Endothelial cell of umbilical vein (primary cell): ENCODE measurements at regions of chr7 and their contacts with region 1.

Region 1: DNA sequence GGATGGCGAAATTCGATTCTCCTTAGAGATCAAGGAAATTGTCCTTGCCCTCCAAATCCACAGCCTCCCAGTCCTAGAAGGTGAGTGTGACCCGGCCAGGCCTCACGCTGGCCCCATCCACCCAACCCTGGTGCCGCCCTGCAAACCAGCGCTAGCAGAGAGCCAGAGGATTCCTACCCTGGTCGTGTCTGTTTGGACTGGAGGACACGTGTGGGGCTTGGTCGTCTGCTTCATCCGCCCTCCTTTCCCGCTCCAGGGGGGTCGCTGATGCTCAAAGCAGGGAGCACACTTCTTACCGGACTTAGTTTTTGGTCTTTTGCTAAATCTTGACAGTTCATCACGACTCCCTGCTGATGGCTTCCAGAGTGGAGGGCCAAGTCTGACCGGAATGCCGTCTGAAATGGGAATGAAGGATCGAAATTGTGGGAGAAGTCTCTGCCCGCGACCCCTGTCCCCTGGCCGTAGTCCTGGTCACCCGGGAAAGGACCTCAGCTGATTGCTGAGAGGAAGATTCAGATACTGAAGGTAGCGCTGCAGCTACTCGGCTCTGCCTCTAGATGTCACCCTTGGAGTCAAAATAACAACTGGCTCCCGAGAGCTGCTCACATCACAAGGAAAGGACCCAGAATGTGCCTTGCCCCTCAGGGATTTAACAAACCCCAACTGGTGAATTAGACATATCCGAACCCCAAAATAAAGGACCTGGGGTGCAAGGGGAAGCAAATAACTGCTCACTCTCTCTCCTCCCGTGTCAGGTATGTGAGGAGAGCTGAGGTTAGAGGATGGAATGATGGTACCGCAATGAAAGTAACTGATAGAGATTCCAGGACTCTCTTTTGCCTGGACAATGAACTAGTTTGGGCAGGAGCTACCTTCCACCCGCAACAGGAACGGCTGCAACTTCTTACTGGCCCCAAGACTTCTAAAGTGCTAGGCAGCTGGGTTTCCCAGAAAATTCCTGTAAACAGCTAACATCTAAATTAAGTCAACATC is 23.5 kb upstream of the ORC5 start:
- DNase-seq: peak; percentile 49
- H3K4me3 ChIP-seq: no peak overlapping the region
- H3K27ac ChIP-seq: no peak overlapping the region
- H3K4me1 ChIP-seq: no peaks in the 10 kb centered on the region
- H3K27me3 ChIP-seq: peaks cover 6 to 29% of the 10 kb centered on the region in 2 experiments
- CTCF ChIP-seq: peak; percentile 70 to 85
- POLR2A ChIP-seq: no peak

Region 2: DNA sequence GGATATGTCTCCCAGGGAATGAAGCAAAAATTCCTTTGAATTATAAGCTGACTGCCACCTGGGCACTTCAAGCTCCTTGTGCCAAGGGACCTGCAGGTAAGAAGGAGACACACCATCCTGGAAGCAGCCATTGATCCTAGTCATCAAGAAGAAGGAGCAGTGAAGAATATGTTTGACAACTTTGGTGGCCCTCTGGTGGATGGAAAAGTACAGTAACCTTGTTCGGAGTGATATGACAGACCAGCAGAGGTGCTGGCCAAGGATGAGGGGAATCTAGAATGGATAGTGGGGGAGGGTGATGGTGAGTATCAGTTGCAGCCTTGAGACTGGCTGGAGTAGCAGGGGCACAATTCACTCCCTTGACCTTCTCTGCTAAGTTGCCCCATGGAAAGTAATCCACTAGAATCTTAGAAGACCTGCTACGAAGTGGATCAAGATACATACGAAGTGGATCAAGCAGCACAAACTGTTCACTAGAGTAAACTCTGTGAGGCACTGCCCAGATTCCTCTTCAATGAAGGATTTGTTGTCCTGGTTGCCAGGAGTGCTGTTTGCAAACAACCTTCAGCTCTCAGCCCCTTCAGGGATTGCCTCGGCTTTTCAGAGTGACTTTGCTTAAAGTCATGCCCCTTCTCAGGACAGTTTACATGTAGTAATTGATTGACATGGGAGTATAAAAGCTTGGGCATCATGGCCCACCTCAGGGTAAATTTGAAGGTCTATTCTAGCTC is 21.2 kb after region 1 on chr7:
- CTCF ChIA-PET with region 1: interaction called, 19 read pairs
- POLR2A ChIA-PET with region 1: no interaction called
- dilution Hi-C with region 1: no loop called
- intact Hi-C with region 1: loop called (anchors 1 kb)
- DNase-seq: no peak
- H3K4me3 ChIP-seq: no peak overlapping the region
- H3K27ac ChIP-seq: no peak overlapping the region
- H3K4me1 ChIP-seq: no peaks in the 10 kb centered on the region
- H3K27me3 ChIP-seq: peaks cover 3 to 4% of the 10 kb centered on the region in 2 experiments
- CTCF ChIP-seq: no peak
- POLR2A ChIP-seq: no peak

Region 3: DNA sequence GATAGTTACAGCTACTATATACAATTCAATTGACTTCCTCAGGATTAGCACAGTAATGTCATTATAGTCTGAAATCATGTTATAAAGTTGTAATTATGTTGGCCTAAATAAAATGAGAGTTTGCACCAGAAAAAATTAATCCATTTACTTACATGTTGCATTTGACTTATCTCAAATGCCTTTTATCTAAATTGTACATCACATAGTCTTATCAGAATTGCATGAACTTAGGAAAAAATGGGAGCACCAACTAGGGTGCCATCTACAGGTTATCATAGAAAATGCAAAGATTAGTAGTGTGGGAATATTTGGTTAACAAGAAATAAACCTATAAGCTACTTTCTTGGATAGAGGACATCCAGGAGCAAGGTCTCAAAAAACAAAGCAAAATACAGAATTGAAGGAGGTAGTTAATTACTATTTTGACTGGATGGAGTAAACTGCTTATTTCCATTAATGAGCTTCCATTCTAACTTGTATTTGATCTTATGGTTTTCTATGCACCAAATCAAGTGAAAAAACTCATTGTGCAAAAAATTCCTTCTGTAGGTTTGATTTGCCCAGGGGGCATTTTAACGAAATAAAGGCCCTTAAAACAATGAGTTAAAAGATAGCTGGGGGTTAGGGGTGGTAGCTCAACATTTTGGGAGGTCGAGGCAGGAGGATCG is 36.5 kb after region 1 on chr7:
- CTCF ChIA-PET with region 1: interaction called, 98 read pairs
- POLR2A ChIA-PET with region 1: no interaction called
- dilution Hi-C with region 1: no loop called
- intact Hi-C with region 1: loop called (anchors 1 kb)
- DNase-seq: peak; percentile 28
- H3K4me3 ChIP-seq: no peak overlapping the region
- H3K27ac ChIP-seq: no peak overlapping the region
- H3K4me1 ChIP-seq: no peaks in the 10 kb centered on the region
- H3K27me3 ChIP-seq: peaks cover 0 to 3% of the 10 kb centered on the region in 2 experiments
- CTCF ChIP-seq: peak; percentile 16 to 32
- POLR2A ChIP-seq: no peak

Region 4: GRCh38 chr7:104272767-104273384 is 41.5 kb after region 1 on chr7:
- CTCF ChIA-PET with region 1: interaction called, 98 read pairs
- POLR2A ChIA-PET with region 1: no interaction called
- dilution Hi-C with region 1: no loop called
- intact Hi-C with region 1: no loop called
- DNase-seq: peak; percentile 55
- H3K4me3 ChIP-seq: no peak overlapping the region
- H3K27ac ChIP-seq: no peak overlapping the region
- H3K4me1 ChIP-seq: no peaks in the 10 kb centered on the region
- H3K27me3 ChIP-seq: peaks cover 1 to 3% of the 10 kb centered on the region in 2 experiments
- CTCF ChIP-seq: peak; percentile 27 to 44
- POLR2A ChIP-seq: no peak

Region 5: DNA sequence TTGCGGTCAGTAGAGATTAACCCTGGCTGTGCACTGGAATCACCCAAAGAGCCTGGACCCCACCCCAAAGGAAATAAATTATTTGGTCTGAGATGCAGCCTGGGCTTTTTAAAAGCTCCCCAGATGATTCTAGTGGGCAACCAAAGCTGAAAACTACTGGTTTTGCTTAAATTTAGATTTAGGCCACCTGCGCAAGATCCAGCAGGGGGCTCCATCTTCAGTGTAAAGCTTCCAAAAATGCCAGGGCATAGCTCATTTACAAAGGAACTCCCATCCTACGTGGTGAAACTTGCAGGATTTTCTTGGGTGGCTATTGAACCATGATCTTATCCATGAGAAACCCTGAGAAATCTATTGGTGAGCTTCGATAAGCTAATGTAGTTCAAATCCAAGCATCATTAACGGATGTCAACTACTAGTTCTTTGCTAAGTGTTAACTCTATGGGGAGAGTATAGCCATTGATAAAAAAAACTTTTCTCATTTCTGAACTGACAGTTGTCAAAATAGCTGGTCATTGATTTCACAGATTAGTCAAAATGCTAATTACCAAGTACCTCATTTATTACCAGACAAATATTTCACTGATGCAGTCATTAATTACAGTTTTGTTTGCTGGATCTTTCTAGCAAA is 412.4 kb after region 1 on chr7:
- CTCF ChIA-PET with region 1: interaction called, 16 read pairs
- POLR2A ChIA-PET with region 1: no interaction called
- dilution Hi-C with region 1: no loop called
- intact Hi-C with region 1: no loop called
- DNase-seq: peak; percentile 23
- H3K4me3 ChIP-seq: no peak overlapping the region
- H3K27ac ChIP-seq: no peak overlapping the region
- H3K4me1 ChIP-seq: no peaks in the 10 kb centered on the region
- H3K27me3 ChIP-seq: peaks cover 0 to 2% of the 10 kb centered on the region in 2 experiments
- CTCF ChIP-seq: peak; percentile 54 to 58
- POLR2A ChIP-seq: no peak

Region 6: DNA sequence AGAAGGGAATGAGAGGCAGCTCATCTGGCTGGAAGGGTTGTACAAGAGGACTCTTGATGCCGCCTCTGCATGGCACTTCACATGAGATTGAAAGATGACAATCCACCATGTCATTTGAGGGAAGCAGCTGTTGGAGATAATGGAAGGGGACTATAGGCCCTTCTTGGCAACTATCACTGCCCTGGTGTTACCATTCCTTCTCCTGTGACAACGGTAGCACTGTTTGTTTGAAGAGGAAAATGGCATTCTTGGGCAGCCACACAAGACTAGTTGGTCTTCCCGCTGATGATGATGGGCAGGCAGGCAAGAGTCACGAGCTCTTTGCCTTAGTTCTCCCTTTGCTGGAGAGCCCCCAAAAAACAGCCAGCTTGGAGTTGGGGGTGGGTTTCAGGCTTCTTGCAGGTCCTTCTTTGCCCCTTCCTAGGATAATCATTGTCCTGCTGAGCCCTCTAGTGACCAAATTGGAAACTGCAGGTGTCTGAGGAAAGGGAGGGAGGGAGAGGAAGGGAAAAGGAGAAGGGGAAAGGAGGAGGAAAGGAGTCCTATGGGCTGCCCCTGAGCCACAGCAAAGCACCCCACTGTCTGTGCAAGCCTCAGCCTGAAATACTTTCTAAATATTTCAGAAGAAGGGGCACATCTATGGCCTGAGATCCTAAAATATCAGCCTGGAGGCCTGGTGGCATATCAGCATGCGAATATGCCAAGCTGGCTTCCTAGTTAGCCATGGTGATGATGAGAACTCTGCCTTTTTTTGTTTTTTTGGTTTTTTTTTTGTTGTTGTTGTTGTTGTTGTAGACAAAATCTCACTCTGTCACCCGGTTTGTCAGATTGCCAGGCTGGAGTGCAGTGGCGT is 617.0 kb after region 1 on chr7:
- CTCF ChIA-PET with region 1: interaction called, 54 read pairs
- POLR2A ChIA-PET with region 1: no interaction called
- dilution Hi-C with region 1: no loop called
- intact Hi-C with region 1: loop called (anchors 1 kb)
- DNase-seq: peak; percentile 62
- H3K4me3 ChIP-seq: no peak overlapping the region
- H3K27ac ChIP-seq: no peak overlapping the region
- H3K4me1 ChIP-seq: no peaks in the 10 kb centered on the region
- H3K27me3 ChIP-seq: peaks cover 6 to 13% of the 10 kb centered on the region in 2 experiments
- CTCF ChIP-seq: peak; percentile 79 to 81
- POLR2A ChIP-seq: no peak

Region 7: DNA sequence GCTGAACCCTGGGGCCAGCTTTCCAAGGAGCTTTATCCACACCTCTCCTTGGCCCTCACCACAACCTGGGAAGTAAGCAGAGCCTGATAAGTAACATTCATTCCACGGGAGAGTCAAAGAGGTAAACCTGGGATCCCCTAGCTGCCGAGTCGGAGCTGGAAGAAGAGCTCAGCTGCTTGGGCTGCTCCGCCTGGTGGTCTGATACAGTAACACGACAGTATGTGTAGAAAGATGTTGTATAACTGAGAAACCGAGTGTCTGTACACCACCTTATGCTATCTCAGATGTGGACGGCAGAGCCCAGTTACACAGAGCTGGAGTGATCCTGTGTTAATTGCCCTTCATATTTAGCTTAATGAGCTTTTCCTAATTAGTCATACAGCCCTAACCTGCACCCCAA is 631.4 kb after region 1 on chr7:
- CTCF ChIA-PET with region 1: interaction called, 15 read pairs
- POLR2A ChIA-PET with region 1: no interaction called
- dilution Hi-C with region 1: no loop called
- intact Hi-C with region 1: no loop called
- DNase-seq: no peak
- H3K4me3 ChIP-seq: no peak overlapping the region
- H3K27ac ChIP-seq: no peak overlapping the region
- H3K4me1 ChIP-seq: no peaks in the 10 kb centered on the region
- H3K27me3 ChIP-seq: peaks cover 0 to 17% of the 10 kb centered on the region in 2 experiments
- CTCF ChIP-seq: no peak
- POLR2A ChIP-seq: no peak